H1 (cell line): ENCODE measurements at regions of chr11 and their contacts with region 1.

Region 1: GRCh38 chr11:70467201-70468085 is 69.1 kb downstream of the CTTN start:
- DNase-seq: peak in 1 of 2 experiments; percentile 91
- H3K4me3 ChIP-seq: no peak overlapping the region
- H3K27ac ChIP-seq: no peak overlapping the region
- H3K4me1 ChIP-seq: peaks cover 0 to 4% (median under 1%) of the 10 kb centered on the region in 4 experiments; a peak in 3 of 7 replicates
- H3K27me3 ChIP-seq: no peaks in the 10 kb centered on the region
- CTCF ChIP-seq: peak; percentile 70 to 81 (median 76)
- EP300 ChIP-seq: no peak
- POLR2A ChIP-seq: no peak
- RAD21 ChIP-seq: peak; percentile 93 to 95

Region 2: DNA sequence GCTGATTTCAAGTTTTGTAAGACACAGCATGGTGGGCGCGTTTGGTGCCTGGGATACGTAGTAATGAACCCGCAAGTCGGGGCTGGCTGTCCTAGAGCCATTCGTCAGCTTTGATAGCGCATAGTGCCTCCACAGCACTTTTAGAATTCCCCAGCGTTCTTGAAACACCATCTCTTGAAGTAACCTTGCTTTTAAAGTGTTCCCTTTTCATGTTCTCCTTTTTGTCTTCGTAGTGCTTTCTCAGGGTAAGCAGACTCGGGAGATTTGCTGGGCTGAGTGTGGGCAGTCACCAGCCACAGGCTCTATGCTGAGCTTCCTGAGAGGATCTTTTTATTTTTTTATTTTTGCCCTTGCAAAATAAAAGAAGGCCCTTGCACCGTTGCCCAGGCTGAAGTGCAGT is 108.7 kb before region 1 on chr11:
- CTCF ChIA-PET with region 1: no interaction called
- POLR2A ChIA-PET with region 1: no interaction called
- DNase-seq: peak in 1 of 2 experiments; percentile 24
- H3K4me3 ChIP-seq: no peak overlapping the region
- H3K27ac ChIP-seq: no peak overlapping the region
- H3K4me1 ChIP-seq: no peaks in the 10 kb centered on the region
- H3K27me3 ChIP-seq: no peaks in the 10 kb centered on the region
- CTCF ChIP-seq: no peak
- EP300 ChIP-seq: no peak
- POLR2A ChIP-seq: no peak
- RAD21 ChIP-seq: no peak

Region 3: DNA sequence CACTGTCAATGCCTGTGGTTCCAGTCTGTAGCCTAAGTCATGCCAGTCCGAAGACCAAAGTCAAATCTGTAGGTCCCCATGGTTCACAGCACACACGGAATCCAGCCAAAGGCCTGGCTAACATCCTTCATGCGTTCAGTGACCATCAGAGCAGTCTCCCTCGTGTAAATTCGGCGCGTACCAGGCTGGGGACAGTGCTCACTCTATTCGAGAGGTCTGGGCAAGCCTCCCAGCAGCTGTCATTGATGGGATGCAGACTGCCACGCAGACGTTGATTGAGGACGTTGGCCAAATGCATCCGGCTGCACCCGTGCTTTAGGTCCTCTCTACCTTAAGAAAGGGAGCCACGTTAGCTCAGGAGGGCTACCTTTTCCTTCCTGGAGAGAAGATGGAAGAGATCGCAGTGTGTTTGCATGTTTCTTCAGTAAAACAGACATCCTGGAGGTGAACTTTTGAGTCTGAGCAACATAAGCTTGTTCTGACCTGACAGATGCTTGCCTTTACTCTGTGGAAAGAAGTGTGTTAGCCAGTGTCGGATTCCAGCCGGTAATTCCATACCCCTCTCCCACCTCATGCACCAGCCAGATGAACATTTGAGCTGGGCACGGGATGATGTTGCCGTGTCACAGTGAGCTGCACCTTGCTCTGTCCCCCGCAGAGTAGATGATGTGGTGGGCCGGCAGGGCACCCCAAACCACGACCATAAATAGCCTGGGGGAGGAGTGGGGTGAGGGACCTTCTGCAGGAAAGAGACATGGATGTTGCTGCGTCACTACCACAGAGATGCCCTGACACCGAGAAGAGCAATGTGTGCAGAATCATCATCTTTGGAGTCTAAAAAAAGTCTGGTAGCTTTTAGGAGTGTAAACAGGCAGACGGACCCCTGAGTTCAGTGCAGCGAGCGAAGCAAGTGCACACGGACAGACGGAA is 56.9 kb before region 1 on chr11:
- CTCF ChIA-PET with region 1: no interaction called
- POLR2A ChIA-PET with region 1: no interaction called
- DNase-seq: no peak
- H3K4me3 ChIP-seq: no peak overlapping the region
- H3K27ac ChIP-seq: no peak overlapping the region
- H3K4me1 ChIP-seq: no peaks in the 10 kb centered on the region
- H3K27me3 ChIP-seq: no peaks in the 10 kb centered on the region
- CTCF ChIP-seq: no peak
- EP300 ChIP-seq: no peak
- POLR2A ChIP-seq: no peak
- RAD21 ChIP-seq: no peak

Region 4: DNA sequence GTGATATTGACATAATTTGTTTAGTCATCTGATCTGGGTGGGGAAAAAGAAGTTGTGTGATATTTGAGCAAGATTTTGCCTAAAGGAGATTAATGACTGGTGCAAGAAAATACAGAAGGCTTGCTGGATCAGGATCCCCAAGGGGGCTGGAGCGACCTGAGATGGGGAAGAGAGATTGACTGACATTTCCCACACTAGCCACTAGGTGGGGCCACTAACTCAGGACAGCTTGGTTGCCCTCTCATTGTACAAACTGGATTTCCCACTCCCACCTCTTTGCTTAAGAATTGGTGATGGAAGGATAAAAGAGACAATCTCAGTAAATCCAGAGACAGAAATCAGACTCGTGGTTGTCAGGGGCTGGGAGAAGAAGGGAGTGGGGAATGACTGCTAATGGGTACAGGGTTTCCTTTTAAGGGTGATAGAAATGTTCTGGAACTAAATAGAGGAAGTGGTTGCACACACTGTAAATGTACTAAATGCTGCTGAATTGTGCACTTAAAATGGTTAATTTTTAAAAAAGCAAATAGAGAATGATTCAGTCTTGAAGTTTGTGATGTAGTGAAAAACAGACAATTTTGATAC is 18.4 kb before region 1 on chr11:
- CTCF ChIA-PET with region 1: interaction called, 11 read pairs
- POLR2A ChIA-PET with region 1: no interaction called
- DNase-seq: no peak
- H3K4me3 ChIP-seq: no peak overlapping the region
- H3K27ac ChIP-seq: no peak overlapping the region
- H3K4me1 ChIP-seq: no peaks in the 10 kb centered on the region
- H3K27me3 ChIP-seq: no peaks in the 10 kb centered on the region
- CTCF ChIP-seq: peak; percentile 76 to 84 (median 79)
- EP300 ChIP-seq: no peak
- POLR2A ChIP-seq: no peak
- RAD21 ChIP-seq: peak; percentile 81 to 85

Region 5: GRCh38 chr11:70495338-70496310 is 28.2 kb after region 1 on chr11:
- CTCF ChIA-PET with region 1: interaction called, 16 read pairs
- POLR2A ChIA-PET with region 1: no interaction called
- DNase-seq: no peak
- H3K4me3 ChIP-seq: no peak overlapping the region
- H3K27ac ChIP-seq: no peak overlapping the region
- H3K4me1 ChIP-seq: peaks cover 0 to 2% (median 0%) of the 10 kb centered on the region in 4 experiments; a peak in 2 of 7 replicates
- H3K27me3 ChIP-seq: no peaks in the 10 kb centered on the region
- CTCF ChIP-seq: no peak
- EP300 ChIP-seq: no peak
- POLR2A ChIP-seq: no peak
- RAD21 ChIP-seq: no peak

Region 6: DNA sequence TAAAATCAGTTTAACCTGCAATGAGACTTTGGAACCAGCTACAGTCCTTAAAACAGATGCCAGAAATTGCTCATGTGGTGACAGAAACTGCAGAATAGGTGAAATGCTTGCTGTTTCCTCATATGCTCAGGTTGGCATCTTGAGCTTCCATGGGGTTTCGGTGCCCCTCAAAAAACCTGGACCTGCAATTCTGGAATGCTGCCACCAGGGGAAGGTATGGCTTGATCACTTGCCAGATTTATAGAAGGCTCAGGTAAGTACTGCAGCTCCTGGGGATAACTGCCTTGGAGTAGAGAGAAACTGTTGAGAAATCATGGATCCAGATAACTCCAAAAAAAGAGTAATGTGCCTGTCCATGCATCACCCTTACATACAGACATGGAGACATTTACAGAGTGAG is 43.9 kb after region 1 on chr11:
- CTCF ChIA-PET with region 1: interaction called, 14 read pairs
- POLR2A ChIA-PET with region 1: no interaction called
- DNase-seq: no peak
- H3K4me3 ChIP-seq: no peak overlapping the region
- H3K27ac ChIP-seq: no peak overlapping the region
- H3K4me1 ChIP-seq: peaks cover 0 to 7% (median 3%) of the 10 kb centered on the region in 4 experiments; a peak in 5 of 7 replicates
- H3K27me3 ChIP-seq: no peaks in the 10 kb centered on the region; a peak in 1 of 7 replicates
- CTCF ChIP-seq: peak; percentile 60 to 80 (median 76)
- EP300 ChIP-seq: no peak
- POLR2A ChIP-seq: no peak
- RAD21 ChIP-seq: peak; percentile 56 to 75

Region 7: GRCh38 chr11:70755410-70756161 is 288.1 kb after region 1 on chr11:
- CTCF ChIA-PET with region 1: interaction called, 25 read pairs
- POLR2A ChIA-PET with region 1: no interaction called
- DNase-seq: peak; percentile 56 to 91
- H3K4me3 ChIP-seq: no peak overlapping the region
- H3K27ac ChIP-seq: no peak overlapping the region
- H3K4me1 ChIP-seq: peaks cover 0 to 2% (median 0%) of the 10 kb centered on the region in 4 experiments; a peak in 2 of 7 replicates
- H3K27me3 ChIP-seq: no peaks in the 10 kb centered on the region
- CTCF ChIP-seq: peak; percentile 95 to 99 (median 96)
- EP300 ChIP-seq: 0 out of 3 replicates have a peak, but pooled peaks of 1 of the 2 experiments have one; percentile 36
- POLR2A ChIP-seq: no peak
- RAD21 ChIP-seq: peak; percentile 95 to 96

Region 8: DNA sequence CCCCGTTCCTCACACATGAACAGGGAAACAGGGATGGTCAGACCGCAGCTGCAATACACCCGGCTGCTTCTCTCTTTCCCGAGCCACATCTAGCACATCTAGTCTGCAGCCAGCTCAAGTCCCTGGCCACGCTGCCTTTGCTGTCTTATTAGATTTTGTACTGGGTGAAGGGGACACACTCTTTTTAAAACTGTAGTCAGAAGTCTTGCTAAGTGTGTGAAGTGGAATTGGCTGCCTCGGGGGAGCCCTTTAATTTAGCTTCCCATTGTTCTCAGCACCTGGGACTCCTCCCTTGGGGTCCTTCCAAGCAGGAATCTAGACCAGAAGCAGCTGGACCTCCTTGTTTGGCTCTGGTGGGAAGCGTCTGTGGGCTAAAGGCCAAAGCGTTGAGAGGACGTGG is 350.9 kb after region 1 on chr11:
- CTCF ChIA-PET with region 1: interaction called, 13 read pairs
- POLR2A ChIA-PET with region 1: no interaction called
- DNase-seq: no peak
- H3K4me3 ChIP-seq: no peak overlapping the region
- H3K27ac ChIP-seq: no peak overlapping the region
- H3K4me1 ChIP-seq: peaks cover 0 to 6% (median 0%) of the 10 kb centered on the region in 4 experiments; a peak in 2 of 7 replicates
- H3K27me3 ChIP-seq: no peaks in the 10 kb centered on the region
- CTCF ChIP-seq: no peak
- EP300 ChIP-seq: no peak
- POLR2A ChIP-seq: no peak
- RAD21 ChIP-seq: no peak